ENCODE measurements at regions of chr6 and their contacts with region 1.

Region 1: GRCh38 chr6:7640607-7641577 is 50.9 kb downstream of the SNRNP48 start:
- DNase-seq: no peak
- H3K4me3 ChIP-seq: no peak overlapping the region
- H3K27ac ChIP-seq: no peak overlapping the region
- H3K4me1 ChIP-seq: no peaks in the 10 kb centered on the region
- H3K27me3 ChIP-seq: peaks cover 0 to 3% (median 0%) of the 10 kb centered on the region in 4 experiments; a peak in 1 of 7 replicates
- CTCF ChIP-seq: peak in 1 of 3 experiments; percentile 37; a peak in 1 of 4 replicates
- EP300 ChIP-seq: no peak
- POLR2A ChIP-seq: no peak
- RAD21 ChIP-seq: peak in 1 of 2 experiments; percentile 38; a peak in 2 of 4 replicates

Region 2: GRCh38 chr6:7624796-7625710 is 15.8 kb before region 1 on chr6:
- CTCF ChIA-PET with region 1: interaction called, 26 read pairs
- POLR2A ChIA-PET with region 1: no interaction called
- DNase-seq: no peak
- H3K4me3 ChIP-seq: no peak overlapping the region
- H3K27ac ChIP-seq: no peak overlapping the region
- H3K4me1 ChIP-seq: peaks cover 0 to 5% (median 0%) of the 10 kb centered on the region in 4 experiments; a peak in 2 of 7 replicates
- H3K27me3 ChIP-seq: peaks cover 0 to 2% (median 0%) of the 10 kb centered on the region in 4 experiments; a peak in 1 of 7 replicates
- CTCF ChIP-seq: no peak
- EP300 ChIP-seq: no peak
- POLR2A ChIP-seq: no peak
- RAD21 ChIP-seq: no peak; a peak in 1 of 4 replicates

Measured in H1 (cell line).